Gastrocnemius medialis (tissue), 4 donors: ENCODE measurements at regions of chr1 and their contacts with region 1.

Region 1: DNA sequence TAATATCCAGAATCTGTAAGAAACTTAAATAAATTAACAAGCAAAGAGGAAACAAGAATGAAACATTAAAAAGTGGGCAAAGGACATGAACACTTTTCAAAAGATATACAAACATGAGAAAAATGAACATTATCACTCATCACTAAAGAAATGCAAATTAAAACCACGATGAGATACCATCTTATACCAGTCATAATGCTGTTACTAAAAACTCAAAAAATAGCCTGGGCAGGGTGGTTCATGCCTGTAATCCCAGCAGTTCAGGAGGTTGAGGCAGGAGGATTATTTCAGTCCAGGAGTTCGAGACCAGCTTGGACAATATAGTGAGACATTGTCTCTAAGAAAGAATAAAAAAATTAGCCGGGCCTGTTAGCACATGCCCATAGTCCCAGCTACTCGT is 6.1 kb downstream of the ZNF124 start:
- DNase-seq: no peak
- ATAC-seq: no peak
- H3K4me3 ChIP-seq: no peak overlapping the region
- H3K27ac ChIP-seq: no peak overlapping the region
- H3K4me1 ChIP-seq: no peaks in the 10 kb centered on the region
- H3K27me3 ChIP-seq: no peaks in the 10 kb centered on the region
- CTCF ChIP-seq: no peak
- POLR2A ChIP-seq: no peak

Region 2: DNA sequence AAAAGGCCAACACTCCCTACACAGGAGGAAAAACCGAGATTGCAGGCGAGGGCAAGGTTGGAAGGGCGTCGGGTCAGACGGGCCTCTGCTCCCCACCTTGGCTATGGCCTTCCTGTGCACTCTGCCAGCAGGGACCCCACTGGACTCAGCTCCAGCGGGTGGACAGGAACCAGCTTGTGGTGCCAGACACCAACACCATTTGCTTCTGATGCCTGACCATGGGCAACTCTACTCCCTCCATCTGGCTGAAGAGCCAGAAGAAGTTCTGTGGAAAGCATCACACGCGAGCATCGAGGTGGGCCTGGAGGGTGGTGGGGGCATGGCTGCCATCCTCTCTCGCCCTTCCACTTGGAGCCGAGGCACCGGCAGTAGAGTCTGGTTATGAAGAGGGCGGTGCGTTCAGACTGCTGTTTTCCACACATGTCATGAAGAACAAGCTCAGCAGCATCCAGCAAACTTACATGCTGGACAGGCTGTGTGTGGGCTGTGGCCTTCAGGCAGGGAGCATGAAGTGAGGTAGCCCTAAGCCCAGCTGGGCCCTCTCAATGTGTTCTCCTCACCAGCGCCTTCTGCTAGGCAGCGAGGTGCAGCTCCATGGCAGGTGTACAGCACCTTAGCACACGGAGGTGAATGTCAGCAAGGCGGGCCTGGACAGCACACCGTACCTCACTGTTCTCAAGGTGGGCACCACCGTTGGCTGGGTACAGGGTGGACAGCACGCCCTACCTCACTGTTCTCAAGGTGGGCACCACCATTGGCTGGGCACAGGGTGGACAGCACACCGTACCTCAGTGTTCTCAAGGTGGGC is 45.9 kb before region 1 on chr1:
- in situ Hi-C with region 1: no loop called
- intact Hi-C with region 1: loop called (anchors 5 kb)
- DNase-seq: no peak
- ATAC-seq: no peak
- H3K4me3 ChIP-seq: no peak overlapping the region
- H3K27ac ChIP-seq: no peak overlapping the region
- H3K4me1 ChIP-seq: no peaks in the 10 kb centered on the region
- H3K27me3 ChIP-seq: no peaks in the 10 kb centered on the region
- CTCF ChIP-seq: no peak
- POLR2A ChIP-seq: no peak

Region 3: DNA sequence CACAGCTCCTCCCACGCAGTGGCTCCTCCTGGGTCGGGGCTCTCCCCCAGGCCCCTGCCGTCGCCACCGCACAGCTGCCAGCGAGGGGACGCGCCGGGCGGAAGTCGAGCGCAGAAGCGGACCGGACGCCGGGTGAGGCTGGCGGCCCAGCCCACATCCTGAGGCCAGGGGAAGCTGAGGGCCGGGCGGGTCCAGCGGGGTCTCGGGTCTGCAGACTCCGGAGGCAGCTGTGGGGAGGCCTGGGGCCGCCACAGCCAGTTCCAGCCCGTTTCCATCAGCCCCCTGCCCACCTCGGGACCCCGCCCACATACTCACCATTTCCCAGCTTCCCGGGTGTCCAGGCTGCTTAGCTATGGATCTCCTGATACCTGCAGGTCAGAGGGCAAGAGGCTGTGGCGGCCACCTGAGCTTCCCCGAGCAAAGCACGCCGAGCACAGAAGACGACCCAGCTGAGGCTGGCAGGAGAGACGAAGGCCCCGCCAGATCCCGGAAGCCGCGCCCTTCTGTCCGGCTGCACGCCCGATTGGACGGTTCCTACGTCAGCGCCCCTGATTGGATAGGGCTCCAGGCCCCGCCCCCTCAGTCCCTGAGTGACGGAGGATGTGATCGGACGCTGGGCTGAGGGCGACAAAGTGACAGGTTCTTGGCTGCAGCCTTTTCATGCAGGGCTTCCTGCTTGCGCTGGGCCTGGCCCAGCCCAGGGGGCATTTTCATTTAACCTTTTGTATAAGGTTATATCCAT is 44.9 kb after region 1 on chr1:
- in situ Hi-C with region 1: no loop called
- intact Hi-C with region 1: loop called (anchors 5 kb)
- DNase-seq: peak; percentile 96 to 97
- ATAC-seq: peak; percentile 99 to 100
- H3K4me3 ChIP-seq: peak overlapping the region; percentile 73 to 98 (median 88)
- H3K27ac ChIP-seq: peak overlapping the region; percentile 77 to 89 (median 85)
- H3K4me1 ChIP-seq: peaks cover 16 to 18% of the 10 kb centered on the region in 2 donors
- H3K27me3 ChIP-seq: no peaks in the 10 kb centered on the region
- CTCF ChIP-seq: no peak
- POLR2A ChIP-seq: peak; percentile 68 to 71